ENCODE measurements at regions of chr13 and their contacts with region 1.

Region 1: DNA sequence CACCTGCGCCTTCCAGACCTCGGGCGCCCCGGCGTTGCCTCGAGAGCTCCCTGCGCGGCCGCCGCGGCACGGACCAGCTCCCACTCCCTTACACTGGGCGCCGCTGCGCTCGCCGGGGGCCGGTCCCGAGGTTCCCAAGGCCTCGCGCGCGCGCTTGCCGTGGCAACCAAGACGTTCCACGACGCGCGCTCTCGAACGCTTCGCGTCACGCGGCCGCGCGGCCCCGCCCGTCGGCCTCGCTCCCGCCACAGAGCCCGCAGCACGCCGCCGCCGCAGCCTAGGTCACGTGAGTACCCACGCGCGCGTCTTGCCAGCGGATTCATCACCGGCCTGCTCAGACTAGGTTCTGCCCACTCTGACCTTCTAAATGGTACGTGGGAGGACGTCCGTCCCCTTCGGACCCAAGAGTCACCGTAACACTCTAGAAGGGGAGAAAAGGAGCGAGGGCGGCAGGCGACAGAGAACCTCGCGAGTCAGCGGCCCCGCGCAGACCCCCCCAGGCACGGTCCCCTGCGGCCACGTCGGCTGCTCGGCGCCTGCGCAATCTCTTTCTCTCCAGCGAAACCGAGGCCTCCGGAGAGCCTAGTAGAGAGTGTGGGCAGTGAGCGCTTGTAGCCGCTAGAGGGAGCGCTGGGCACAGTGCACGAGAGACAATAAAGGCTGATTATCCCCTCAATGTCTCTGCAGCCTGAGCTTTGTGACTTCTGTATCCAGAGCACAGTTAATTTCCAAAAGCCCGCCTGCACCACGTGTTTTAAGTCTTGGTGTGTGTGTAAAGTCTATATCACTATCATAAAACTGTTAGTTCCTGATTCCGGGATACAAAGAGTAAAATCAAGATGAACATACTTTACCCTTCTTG is at the start of gene SPART:
- H3K4me3 Mint-ChIP-seq: peak within 1 kb of the TSS; percentile 77
- H3K27ac Mint-ChIP-seq: peak within 1 kb of the TSS; percentile 89
- H3K4me1 Mint-ChIP-seq: peaks cover 33% of the 10 kb centered on the region
- H3K27me3 Mint-ChIP-seq: no peaks in the 10 kb centered on the region

Region 2: GRCh38 chr13:36297366-36298338 is 48.8 kb before region 1 on chr13 and contains the start of gene CCDC169:
- intact Hi-C with region 1: loop called (anchors 5 kb)
- H3K4me3 Mint-ChIP-seq: peak within 1 kb of the TSS; percentile 82
- H3K27ac Mint-ChIP-seq: peak within 1 kb of the TSS; percentile 80
- H3K4me1 Mint-ChIP-seq: peaks cover 15% of the 10 kb centered on the region
- H3K27me3 Mint-ChIP-seq: peaks cover 30% of the 10 kb centered on the region

Region 3: GRCh38 chr13:36395280-36395679 is 48.8 kb after region 1 on chr13:
- intact Hi-C with region 1: loop called (anchors 5 kb)
- H3K4me3 Mint-ChIP-seq: no peak overlapping the region
- H3K27ac Mint-ChIP-seq: peak overlapping the region; percentile 68
- H3K4me1 Mint-ChIP-seq: no peaks in the 10 kb centered on the region
- H3K27me3 Mint-ChIP-seq: no peaks in the 10 kb centered on the region

Region 4: DNA sequence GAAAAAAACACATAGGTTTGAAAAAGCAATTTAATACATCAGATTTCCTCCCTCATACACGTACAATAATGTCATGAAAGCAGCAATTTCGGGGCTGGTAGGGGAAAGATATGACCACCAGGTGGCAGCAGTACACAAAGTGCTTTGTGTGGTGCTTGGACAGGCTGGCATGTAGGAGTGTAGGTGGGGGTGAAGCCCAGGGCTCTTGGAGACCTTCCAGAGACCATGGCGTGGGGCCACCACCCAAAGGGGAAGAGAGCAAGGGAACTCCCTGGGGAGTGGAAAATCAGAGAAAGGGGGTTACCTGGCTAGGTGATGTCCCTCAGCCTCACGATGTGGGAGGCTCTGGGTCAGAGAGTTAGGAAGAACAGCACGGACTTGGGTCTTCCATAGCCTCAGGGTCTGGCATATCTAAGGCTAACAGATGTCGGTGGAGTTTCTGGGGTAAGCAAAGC is 74.0 kb after region 1 on chr13:
- intact Hi-C with region 1: loop called (anchors 1 kb)
- H3K4me3 Mint-ChIP-seq: no peak overlapping the region
- H3K27ac Mint-ChIP-seq: peak overlapping the region; percentile 66
- H3K4me1 Mint-ChIP-seq: peaks cover 40% of the 10 kb centered on the region
- H3K27me3 Mint-ChIP-seq: no peaks in the 10 kb centered on the region

Region 5: GRCh38 chr13:36736119-36736726 is 389.8 kb after region 1 on chr13:
- intact Hi-C with region 1: loop called (anchors 2 kb)
- H3K4me3 Mint-ChIP-seq: no peak overlapping the region
- H3K27ac Mint-ChIP-seq: no peak overlapping the region
- H3K4me1 Mint-ChIP-seq: no peaks in the 10 kb centered on the region
- H3K27me3 Mint-ChIP-seq: no peaks in the 10 kb centered on the region

Region 6: DNA sequence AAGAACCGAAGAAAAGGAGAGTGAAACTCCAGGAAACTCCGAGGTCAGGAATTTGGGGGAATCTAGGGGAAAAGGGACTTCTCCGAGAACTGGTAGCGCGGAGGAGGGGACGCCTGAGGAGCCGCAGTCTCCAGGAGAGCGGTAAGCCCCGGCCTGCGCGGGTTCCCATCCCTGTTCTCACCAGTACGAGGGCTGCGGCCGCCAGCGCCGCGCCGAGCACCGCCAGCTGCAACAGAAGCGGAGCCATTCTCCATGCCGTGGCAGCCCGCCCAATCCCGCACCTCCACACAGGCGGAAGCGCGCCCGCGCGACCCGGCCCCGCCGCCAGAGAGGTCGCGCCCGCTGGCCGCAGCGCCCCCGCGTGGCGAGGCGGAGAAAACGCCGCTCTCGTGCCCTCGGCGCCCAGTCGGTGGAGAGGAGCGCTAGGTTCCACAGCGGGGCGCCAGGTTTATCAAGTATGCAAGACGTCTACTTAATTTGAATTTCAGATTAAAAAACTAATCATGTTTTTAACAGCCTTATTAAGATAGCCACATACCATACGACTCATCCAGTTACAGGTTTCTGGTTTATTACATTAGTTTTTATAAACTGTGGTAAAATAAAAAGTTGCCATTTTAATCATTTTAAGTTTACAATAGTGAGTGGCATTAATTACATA is 652.7 kb after region 1 on chr13 and contains the start of gene ALG5:
- intact Hi-C with region 1: loop called (anchors 2 kb)
- H3K4me3 Mint-ChIP-seq: peak within 1 kb of the TSS; percentile 100
- H3K27ac Mint-ChIP-seq: peak within 1 kb of the TSS; percentile 99
- H3K4me1 Mint-ChIP-seq: peaks cover 24% of the 10 kb centered on the region
- H3K27me3 Mint-ChIP-seq: no peaks in the 10 kb centered on the region